Esophagus muscularis mucosa (tissue), 4 donors: ENCODE measurements at regions of chr3 and their contacts with region 1.

Region 1: GRCh38 chr3:196739671-196740480 is at the start of gene PAK2:
- DNase-seq: peak; percentile 96
- H3K4me3 ChIP-seq: peak within 1 kb of the TSS; percentile 68 to 97 (median 90)
- H3K27ac ChIP-seq: peak within 1 kb of the TSS; percentile 95 to 99 (median 97)
- H3K4me1 ChIP-seq: peaks cover 17 to 42% (median 36%) of the 10 kb centered on the region in 4 donors
- H3K27me3 ChIP-seq: no peaks in the 10 kb centered on the region
- CTCF ChIP-seq: peak in 1 of 3 experiments; percentile 7
- EP300 ChIP-seq: no peak
- POLR2A ChIP-seq: peak; percentile 49
- total RNA-seq, gene PAK2: 47.2 to 52.4 (median 51.6) TPM

Region 2: DNA sequence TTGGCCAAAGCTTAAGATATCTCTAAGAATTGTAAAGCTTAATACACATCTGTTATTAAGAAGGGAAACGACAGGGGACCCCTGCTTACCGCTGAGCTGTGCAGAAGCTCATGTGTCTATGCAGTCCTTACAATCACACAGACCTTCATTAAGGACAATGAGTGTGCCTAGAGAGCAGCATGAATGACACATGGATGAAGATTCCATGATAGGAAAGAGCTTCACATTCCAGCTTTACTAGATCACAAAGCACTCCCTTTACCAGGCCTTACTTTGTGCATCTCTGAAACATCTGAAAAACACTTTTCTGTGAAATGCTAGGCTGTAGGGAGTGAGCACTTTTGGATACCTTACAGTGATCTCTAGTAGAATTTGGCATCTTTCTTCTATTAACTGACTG is 268.3 kb before region 1 on chr3:
- intact Hi-C with region 1: no loop called
- DNase-seq: no peak
- H3K4me3 ChIP-seq: no peak overlapping the region
- H3K27ac ChIP-seq: no peak overlapping the region
- H3K4me1 ChIP-seq: no peaks in the 10 kb centered on the region
- H3K27me3 ChIP-seq: no peaks in the 10 kb centered on the region
- CTCF ChIP-seq: no peak
- EP300 ChIP-seq: no peak
- POLR2A ChIP-seq: no peak

Region 3: GRCh38 chr3:196547067-196547466 is 192.8 kb before region 1 on chr3:
- intact Hi-C with region 1: no loop called
- DNase-seq: no peak
- H3K4me3 ChIP-seq: no peak overlapping the region
- H3K27ac ChIP-seq: no peak overlapping the region
- H3K4me1 ChIP-seq: no peaks in the 10 kb centered on the region
- H3K27me3 ChIP-seq: no peaks in the 10 kb centered on the region
- CTCF ChIP-seq: no peak
- EP300 ChIP-seq: no peak
- POLR2A ChIP-seq: no peak

Region 4: GRCh38 chr3:196711838-196712513 is 27.9 kb before region 1 on chr3 and contains the starts of genes CEP19 and PIGX:
- intact Hi-C with region 1: loop called (anchors 2 kb)
- DNase-seq: peak; percentile 93
- H3K4me3 ChIP-seq: peak within 1 kb of the TSS; percentile 82 to 96 (median 82)
- H3K27ac ChIP-seq: peak within 1 kb of the TSS; percentile 93 to 96 (median 94)
- H3K4me1 ChIP-seq: peaks cover 13 to 29% (median 22%) of the 10 kb centered on the region in 4 donors
- H3K27me3 ChIP-seq: no peaks in the 10 kb centered on the region
- CTCF ChIP-seq: peak in 2 of 3 experiments; percentile 13 to 23
- EP300 ChIP-seq: no peak
- POLR2A ChIP-seq: peak; percentile 44
- total RNA-seq, gene CEP19: 1.5 to 4.0 (median 3.3) TPM
- total RNA-seq, gene PIGX: 23.0 to 31.6 (median 25.2) TPM

Region 5: DNA sequence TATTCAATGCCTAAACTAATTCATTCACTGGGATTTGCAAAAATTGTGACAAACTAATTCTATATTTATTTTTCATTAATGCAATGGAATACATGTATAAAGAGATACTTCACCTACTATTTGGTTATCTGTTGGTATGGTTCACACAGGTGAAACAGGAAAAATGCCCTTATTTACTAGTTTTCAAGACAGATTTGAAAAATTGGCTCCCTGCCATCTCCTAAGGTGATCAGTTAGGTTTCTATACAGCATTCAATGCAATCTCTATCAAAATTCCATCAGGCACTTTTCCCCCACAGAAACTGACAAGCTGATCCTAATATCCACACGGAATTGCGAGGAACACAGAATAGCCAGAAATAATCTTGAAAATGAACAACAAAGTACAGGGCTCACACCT is 457.5 kb after region 1 on chr3:
- intact Hi-C with region 1: no loop called
- DNase-seq: no peak
- H3K4me3 ChIP-seq: no peak overlapping the region
- H3K27ac ChIP-seq: no peak overlapping the region
- H3K4me1 ChIP-seq: peaks cover 0 to 3% (median 0%) of the 10 kb centered on the region in 4 donors
- H3K27me3 ChIP-seq: no peaks in the 10 kb centered on the region
- CTCF ChIP-seq: no peak
- EP300 ChIP-seq: no peak
- POLR2A ChIP-seq: no peak